ENCODE measurements at regions of chr3 and their contacts with region 1.

Region 1: GRCh38 chr3:153768561-153769469 is 352.4 kb upstream of the ARHGEF26 start:
- DNase-seq: peak; percentile 47
- ATAC-seq: peak; percentile 97
- H3K4me3 ChIP-seq: no peak overlapping the region
- H3K27ac ChIP-seq: no peak overlapping the region
- H3K4me1 ChIP-seq: no peaks in the 10 kb centered on the region
- H3K27me3 ChIP-seq: no peaks in the 10 kb centered on the region
- CTCF ChIP-seq: peak; percentile 46 to 84 (median 79); a peak in 5 of 6 replicates
- POLR2A ChIP-seq: no peak
- RAD21 ChIP-seq: peak; percentile 84

Region 2: DNA sequence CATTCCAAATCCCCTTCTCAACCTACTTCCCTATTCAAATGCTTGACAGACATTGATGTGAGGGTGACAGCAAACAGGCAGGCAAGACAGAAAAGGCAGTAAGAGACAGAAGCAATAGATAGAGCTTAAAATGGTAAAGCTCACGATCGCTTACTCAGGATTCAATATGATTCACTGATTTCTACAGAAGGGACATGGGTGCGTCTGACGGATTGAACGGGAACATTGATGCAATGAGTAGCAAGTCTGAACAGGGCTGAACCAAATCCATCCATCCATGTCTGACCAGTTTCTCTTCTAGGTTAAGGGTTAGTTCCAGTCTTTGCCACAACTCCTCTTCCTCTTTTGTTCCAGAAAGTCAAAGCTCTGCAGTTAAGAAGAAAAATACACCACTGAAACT is 898.8 kb before region 1 on chr3:
- CTCF ChIA-PET with region 1: no interaction called
- POLR2A ChIA-PET with region 1: no interaction called
- RAD21 ChIA-PET with region 1: no interaction called
- intact Hi-C with region 1: no loop called
- DNase-seq: no peak
- ATAC-seq: no peak
- H3K4me3 ChIP-seq: no peak overlapping the region
- H3K27ac ChIP-seq: no peak overlapping the region
- H3K4me1 ChIP-seq: no peaks in the 10 kb centered on the region
- H3K27me3 ChIP-seq: no peaks in the 10 kb centered on the region
- CTCF ChIP-seq: no peak
- POLR2A ChIP-seq: no peak
- RAD21 ChIP-seq: no peak

Region 3: DNA sequence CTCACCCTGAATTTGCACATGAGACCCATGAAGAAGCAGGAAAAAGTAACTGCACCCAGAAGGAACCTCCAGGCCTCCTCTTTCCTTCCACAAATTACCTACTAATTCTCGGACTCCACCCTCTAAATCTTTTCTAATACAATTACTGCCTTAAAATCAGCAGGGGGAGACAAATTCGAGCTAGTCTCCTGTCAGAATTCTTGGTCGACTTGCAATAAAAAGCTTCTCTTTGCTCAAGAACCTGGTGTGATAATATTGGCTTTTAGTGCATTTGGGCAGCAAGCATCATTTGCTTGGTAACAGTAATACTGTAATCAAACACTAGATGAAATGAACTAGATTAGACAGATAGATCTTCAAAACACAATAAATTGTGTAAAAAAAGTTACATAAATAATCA is 324.9 kb before region 1 on chr3:
- CTCF ChIA-PET with region 1: no interaction called
- POLR2A ChIA-PET with region 1: no interaction called
- RAD21 ChIA-PET with region 1: no interaction called
- intact Hi-C with region 1: loop called (anchors 10 kb)
- DNase-seq: peak; percentile 10
- ATAC-seq: no peak
- H3K4me3 ChIP-seq: no peak overlapping the region
- H3K27ac ChIP-seq: no peak overlapping the region
- H3K4me1 ChIP-seq: no peaks in the 10 kb centered on the region
- H3K27me3 ChIP-seq: no peaks in the 10 kb centered on the region
- CTCF ChIP-seq: peak; percentile 18 to 48 (median 27); a peak in 4 of 6 replicates
- POLR2A ChIP-seq: no peak
- RAD21 ChIP-seq: peak; percentile 54; the same call in 1 of the 2 replicates

Region 4: DNA sequence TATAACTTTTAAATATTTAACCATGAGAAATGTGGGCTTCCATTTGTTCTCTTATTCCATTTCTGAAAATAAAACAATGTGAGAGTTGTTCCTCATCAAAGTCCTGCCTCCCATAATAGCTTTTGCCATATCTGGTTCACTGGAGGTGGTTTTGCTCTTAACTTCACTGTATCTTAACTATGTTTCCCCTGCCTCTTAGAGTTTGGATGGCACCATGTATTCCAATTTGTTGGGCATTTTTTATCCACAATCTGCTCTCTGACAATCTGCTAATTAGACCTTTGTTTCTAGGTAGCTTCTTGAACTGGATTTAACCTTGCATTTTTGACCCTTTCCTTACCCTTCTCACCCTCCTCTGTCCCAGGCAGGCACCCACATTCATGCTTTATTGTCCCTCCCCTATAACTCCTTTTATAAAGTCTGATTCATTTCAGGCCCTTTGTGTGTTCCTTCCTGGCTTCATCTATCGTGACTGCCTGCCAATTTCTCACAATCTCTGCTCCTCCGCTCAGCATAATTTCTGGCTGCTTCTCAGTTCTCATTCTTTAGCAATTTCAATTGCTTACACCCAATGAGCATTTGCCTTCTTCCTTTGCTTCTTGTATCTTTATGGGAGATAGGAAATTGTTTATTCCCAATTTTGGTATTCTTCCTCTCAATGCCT is 208.2 kb after region 1 on chr3:
- CTCF ChIA-PET with region 1: no interaction called
- POLR2A ChIA-PET with region 1: no interaction called
- RAD21 ChIA-PET with region 1: no interaction called
- intact Hi-C with region 1: no loop called
- DNase-seq: no peak
- ATAC-seq: no peak
- H3K4me3 ChIP-seq: no peak overlapping the region
- H3K27ac ChIP-seq: no peak overlapping the region
- H3K4me1 ChIP-seq: peaks cover 6 to 11% of the 10 kb centered on the region in 2 experiments; a peak in 3 of 4 replicates
- H3K27me3 ChIP-seq: no peaks in the 10 kb centered on the region
- CTCF ChIP-seq: no peak
- POLR2A ChIP-seq: no peak
- RAD21 ChIP-seq: no peak

Measured in HCT116 (cell line).